Ovary (tissue), 10 donors: ENCODE measurements at regions of chr10 and their contacts with region 1.

Region 1: GRCh38 chr10:93280699-93281366 is 201.3 kb downstream of the MYOF start:
- DNase-seq: no peak
- H3K4me3 ChIP-seq: no peak overlapping the region
- H3K27ac ChIP-seq: no peak overlapping the region
- H3K4me1 ChIP-seq: no peaks in the 10 kb centered on the region
- H3K27me3 ChIP-seq: no peaks in the 10 kb centered on the region
- CTCF ChIP-seq: no peak
- EP300 ChIP-seq: no peak
- POLR2A ChIP-seq: no peak

Region 2: DNA sequence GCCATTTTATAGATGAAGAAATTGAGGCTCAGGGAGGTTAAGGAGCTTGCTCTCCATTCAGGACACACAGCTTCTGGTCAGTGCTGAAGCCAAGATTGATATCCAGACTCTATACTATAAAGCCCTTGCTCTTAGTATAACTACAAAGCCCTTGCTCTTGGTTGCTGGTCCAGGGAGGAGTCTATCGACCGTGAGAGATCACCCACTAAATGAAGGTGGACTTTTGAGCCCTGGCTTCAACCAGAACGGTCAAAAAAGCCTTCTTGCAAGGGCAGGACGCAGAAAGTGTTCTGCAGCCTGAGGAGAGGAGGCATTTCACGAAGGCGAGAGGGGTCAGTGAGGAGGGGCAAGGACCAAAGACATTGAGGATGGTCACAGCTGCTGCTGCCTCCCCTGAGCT is 30.8 kb before region 1 on chr10:
- intact Hi-C with region 1: loop called in 1 of 4 experiments (anchors 1 kb)
- DNase-seq: no peak
- H3K4me3 ChIP-seq: no peak overlapping the region
- H3K27ac ChIP-seq: no peak overlapping the region
- H3K4me1 ChIP-seq: no peaks in the 10 kb centered on the region
- H3K27me3 ChIP-seq: no peaks in the 10 kb centered on the region
- CTCF ChIP-seq: no peak
- EP300 ChIP-seq: no peak
- POLR2A ChIP-seq: no peak